Common myeloid progenitor, CD34-positive (primary cell): ENCODE measurements at regions of chr1 and their contacts with region 1.

Region 1: GRCh38 chr1:34786521-34787325 is 5.7 kb downstream of the GJB3 start:
- DNase-seq: peak; percentile 70 to 85 (median 80)
- H3K4me3 ChIP-seq: no peak overlapping the region
- H3K27ac ChIP-seq: no peak overlapping the region
- H3K4me1 ChIP-seq: peaks cover 0 to 4% (median 2%) of the 10 kb centered on the region in 4 experiments
- H3K27me3 ChIP-seq: peaks cover 0 to 29% (median 9%) of the 10 kb centered on the region in 5 experiments

Region 2: GRCh38 chr1:34803770-34804169 is 17.0 kb after region 1 on chr1:
- CTCF ChIA-PET with region 1: no interaction called
- POLR2A ChIA-PET with region 1: no interaction called
- DNase-seq: no peak
- H3K4me3 ChIP-seq: no peak overlapping the region
- H3K27ac ChIP-seq: no peak overlapping the region
- H3K4me1 ChIP-seq: no peaks in the 10 kb centered on the region
- H3K27me3 ChIP-seq: peaks cover 0 to 3% (median 0%) of the 10 kb centered on the region in 5 experiments

Region 3: GRCh38 chr1:34852677-34853217 is 66.0 kb after region 1 on chr1:
- CTCF ChIA-PET with region 1: interaction called, 29 read pairs
- POLR2A ChIA-PET with region 1: interaction called, 6 read pairs
- DNase-seq: peak; percentile 95 to 98 (median 97)
- H3K4me3 ChIP-seq: no peak overlapping the region
- H3K27ac ChIP-seq: no peak overlapping the region
- H3K4me1 ChIP-seq: peaks cover 0 to 3% (median 1%) of the 10 kb centered on the region in 4 experiments
- H3K27me3 ChIP-seq: no peaks in the 10 kb centered on the region